ENCODE measurements at regions of chr19 and their contacts with region 1.

Region 1: GRCh38 chr19:1905071-1905862 is at the starts of genes ADAT3 and SCAMP4:
- DNase-seq: peak; percentile 100
- ATAC-seq: peak; percentile 99
- H3K4me3 Mint-ChIP-seq: peak within 1 kb of the TSS; percentile 82
- H3K27ac Mint-ChIP-seq: peak within 1 kb of the TSS; percentile 83
- H3K4me1 Mint-ChIP-seq: peaks cover 48% of the 10 kb centered on the region
- H3K27me3 Mint-ChIP-seq: no peaks in the 10 kb centered on the region
- total RNA-seq, gene ADAT3: 9.3 to 11.4 TPM
- total RNA-seq, gene SCAMP4: 32.9 to 34.8 TPM

Region 2: DNA sequence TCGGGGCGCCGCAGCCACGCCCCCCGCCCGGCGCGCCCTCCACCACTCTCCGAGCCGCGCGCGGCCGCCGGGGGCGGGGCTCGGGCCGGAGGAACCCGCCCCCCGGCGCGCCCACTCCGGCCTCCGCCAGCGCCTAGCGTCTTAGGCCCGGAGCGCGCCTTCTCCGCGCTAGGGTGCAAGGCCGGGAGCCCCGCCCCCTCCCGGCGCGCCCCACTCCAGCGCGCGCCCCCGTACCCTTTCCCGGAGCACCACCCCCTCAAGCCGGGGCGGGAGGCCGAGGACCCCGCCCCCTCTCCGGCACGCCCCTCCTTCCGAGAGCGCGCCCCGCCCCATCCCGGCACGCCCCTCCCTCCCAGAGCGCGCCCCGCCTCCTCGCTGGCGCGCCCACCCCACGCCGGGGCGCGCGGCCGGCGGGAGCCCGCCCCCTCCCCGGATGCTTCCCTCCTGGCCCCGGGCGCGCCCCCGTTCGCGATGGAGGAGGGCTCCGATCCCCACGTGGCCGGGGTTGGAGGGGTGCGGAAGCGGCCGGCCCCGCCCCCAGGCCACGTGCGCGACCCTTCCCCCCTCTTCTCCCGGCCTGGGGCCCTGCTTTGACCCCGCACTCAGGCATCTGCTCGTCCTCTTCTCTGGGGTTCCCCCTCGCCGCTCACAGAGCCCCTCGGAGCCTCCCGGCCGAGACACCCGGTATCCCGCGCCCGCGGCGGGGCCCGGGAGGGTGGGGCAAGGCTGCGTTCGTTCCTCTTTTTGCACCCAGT is 41.4 kb before region 1 on chr19:
- CTCF ChIA-PET with region 1: interaction called, 10 read pairs
- DNase-seq: peak; percentile 95
- ATAC-seq: peak; percentile 79
- H3K4me3 Mint-ChIP-seq: peak overlapping the region; percentile 69
- H3K27ac Mint-ChIP-seq: peak overlapping the region; percentile 78
- H3K4me1 Mint-ChIP-seq: peaks cover 34% of the 10 kb centered on the region
- H3K27me3 Mint-ChIP-seq: no peaks in the 10 kb centered on the region

Region 3: DNA sequence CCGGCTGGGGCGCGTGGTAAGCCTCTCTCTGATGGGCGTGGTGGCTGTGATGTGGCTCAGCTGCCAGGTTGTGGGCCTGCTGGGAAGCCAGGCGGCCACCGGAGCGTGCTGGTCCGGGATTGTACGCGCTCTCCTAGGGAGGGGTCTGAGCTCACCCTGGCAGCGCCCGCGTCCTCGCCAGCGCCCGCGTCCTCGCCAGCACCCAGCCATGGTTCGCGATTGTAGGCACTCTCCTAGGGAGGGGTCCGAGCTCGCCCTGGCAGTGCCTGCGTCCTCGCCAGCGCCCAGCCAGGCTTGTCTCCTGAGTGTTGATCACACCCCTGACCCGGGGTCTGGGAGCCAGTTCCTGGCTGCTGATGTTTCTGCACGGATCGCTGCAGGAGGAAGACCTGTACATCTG is 13.7 kb after region 1 on chr19:
- CTCF ChIA-PET with region 1: no interaction called
- DNase-seq: no peak
- ATAC-seq: no peak
- H3K4me3 Mint-ChIP-seq: no peak overlapping the region
- H3K27ac Mint-ChIP-seq: no peak overlapping the region
- H3K4me1 Mint-ChIP-seq: peaks cover 25% of the 10 kb centered on the region
- H3K27me3 Mint-ChIP-seq: no peaks in the 10 kb centered on the region

Region 4: GRCh38 chr19:1929021-1929742 is 23.9 kb after region 1 on chr19:
- CTCF ChIA-PET with region 1: interaction called, 17 read pairs
- DNase-seq: peak; percentile 89
- ATAC-seq: peak; percentile 96
- H3K4me3 Mint-ChIP-seq: peak overlapping the region; percentile 59
- H3K27ac Mint-ChIP-seq: no peak overlapping the region
- H3K4me1 Mint-ChIP-seq: peaks cover 14% of the 10 kb centered on the region
- H3K27me3 Mint-ChIP-seq: no peaks in the 10 kb centered on the region

Measured in activated CD8-positive, alpha-beta memory T cell treated with anti-CD3 and anti-CD28 coated beads, Interleukin-2, amount 10 ng/mL, durations not matched to agents 7 days and 5 days (primary cell).